Mammary epithelial cell (primary cell): ENCODE measurements at regions of chr15 and their contacts with region 1.

Region 1: GRCh38 chr15:54836052-54836795 is 360.5 kb downstream of the RSL24D1 start:
- DNase-seq: no peak
- H3K4me3 ChIP-seq: no peak overlapping the region
- H3K27ac ChIP-seq: no peak overlapping the region
- H3K4me1 ChIP-seq: no peaks in the 10 kb centered on the region
- H3K27me3 ChIP-seq: no peaks in the 10 kb centered on the region
- CTCF ChIP-seq: no peak

Region 2: GRCh38 chr15:54909236-54909635 is 73.0 kb after region 1 on chr15:
- CTCF ChIA-PET with region 1: no interaction called
- dilution Hi-C with region 1: loop called (anchors 5 kb)
- in situ Hi-C with region 1: no loop called
- intact Hi-C with region 1: no loop called
- DNase-seq: no peak
- H3K4me3 ChIP-seq: no peak overlapping the region
- H3K27ac ChIP-seq: no peak overlapping the region
- H3K4me1 ChIP-seq: no peaks in the 10 kb centered on the region
- H3K27me3 ChIP-seq: no peaks in the 10 kb centered on the region
- CTCF ChIP-seq: no peak

Region 3: GRCh38 chr15:55241891-55242290 is 405.7 kb after region 1 on chr15:
- CTCF ChIA-PET with region 1: no interaction called
- dilution Hi-C with region 1: no loop called
- in situ Hi-C with region 1: no loop called
- intact Hi-C with region 1: no loop called
- DNase-seq: no peak
- H3K4me3 ChIP-seq: no peak overlapping the region
- H3K27ac ChIP-seq: no peak overlapping the region
- H3K4me1 ChIP-seq: no peaks in the 10 kb centered on the region
- H3K27me3 ChIP-seq: no peaks in the 10 kb centered on the region
- CTCF ChIP-seq: no peak